AG04449 (cell line): ENCODE measurements at regions of chr11 and their contacts with region 1.

Region 1: DNA sequence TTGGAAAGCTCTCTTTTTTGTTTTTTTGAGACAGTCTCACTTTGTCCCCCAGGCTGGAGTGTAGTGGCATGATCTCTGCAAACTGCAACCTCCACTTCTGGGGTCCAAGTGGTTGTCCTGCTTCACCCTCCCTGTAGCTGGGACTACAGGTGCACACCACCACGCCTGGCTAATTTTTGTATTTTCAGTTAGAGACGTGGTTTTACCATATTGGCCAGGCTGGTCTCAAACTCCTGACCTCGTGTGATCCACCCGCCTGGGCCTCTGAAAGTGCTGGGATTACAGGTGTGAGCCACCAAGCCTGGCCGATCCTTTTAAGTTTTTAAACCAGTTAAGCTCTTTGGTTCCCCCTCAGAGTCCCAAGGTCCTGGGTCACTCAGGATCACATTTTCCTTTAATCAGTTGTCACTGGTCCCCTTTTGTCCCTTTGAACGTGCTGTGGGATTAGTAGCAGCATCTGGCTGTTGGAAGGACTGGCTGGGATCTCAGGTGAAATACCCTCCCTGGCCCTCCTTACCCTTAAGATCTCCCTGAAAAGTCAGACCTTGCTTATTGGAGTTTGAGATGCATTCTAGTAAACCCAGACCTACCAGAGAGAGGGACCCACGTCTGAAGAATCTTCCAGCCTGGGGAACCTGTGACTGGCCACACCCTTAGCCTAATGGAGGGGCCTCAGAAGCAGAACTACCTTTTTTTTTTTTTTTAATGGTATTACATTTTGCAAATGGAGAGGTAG is 8.1 kb downstream of the MALAT1 start:
- DNase-seq: peak; percentile 94
- H3K4me3 ChIP-seq: peak overlapping the region; percentile 99
- CTCF ChIP-seq: no peak

Region 2: DNA sequence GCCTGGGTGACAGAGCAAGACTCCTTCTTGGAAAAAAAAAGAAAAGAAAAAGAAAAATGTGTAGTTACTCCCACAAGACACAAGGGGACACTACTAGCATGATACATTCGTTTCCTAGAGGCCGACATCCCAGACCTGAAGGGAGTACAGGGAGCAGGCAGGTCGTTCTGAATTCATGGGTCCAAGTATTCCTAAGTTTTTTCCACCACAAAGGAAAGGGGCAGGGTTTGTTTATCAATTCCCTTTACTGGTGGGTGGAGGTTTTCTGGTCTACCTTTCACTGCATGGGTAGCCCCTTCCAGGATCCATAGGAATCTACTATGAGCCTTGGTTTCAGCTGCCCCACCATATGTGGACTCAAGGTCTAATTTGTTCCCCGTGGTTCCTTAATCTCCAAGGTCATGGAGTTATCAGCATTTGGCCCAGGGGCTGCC is 140.6 kb before region 1 on chr11:
- CTCF ChIA-PET with region 1: interaction called, 14 read pairs
- POLR2A ChIA-PET with region 1: interaction called, 33 read pairs
- DNase-seq: no peak
- H3K4me3 ChIP-seq: no peak overlapping the region
- CTCF ChIP-seq: peak; percentile 67

Region 3: GRCh38 chr11:65448418-65449105 is 58.4 kb before region 1 on chr11:
- CTCF ChIA-PET with region 1: interaction called, 17 read pairs
- POLR2A ChIA-PET with region 1: interaction called, 142 read pairs
- DNase-seq: no peak
- H3K4me3 ChIP-seq: no peak overlapping the region
- CTCF ChIP-seq: no peak

Region 4: DNA sequence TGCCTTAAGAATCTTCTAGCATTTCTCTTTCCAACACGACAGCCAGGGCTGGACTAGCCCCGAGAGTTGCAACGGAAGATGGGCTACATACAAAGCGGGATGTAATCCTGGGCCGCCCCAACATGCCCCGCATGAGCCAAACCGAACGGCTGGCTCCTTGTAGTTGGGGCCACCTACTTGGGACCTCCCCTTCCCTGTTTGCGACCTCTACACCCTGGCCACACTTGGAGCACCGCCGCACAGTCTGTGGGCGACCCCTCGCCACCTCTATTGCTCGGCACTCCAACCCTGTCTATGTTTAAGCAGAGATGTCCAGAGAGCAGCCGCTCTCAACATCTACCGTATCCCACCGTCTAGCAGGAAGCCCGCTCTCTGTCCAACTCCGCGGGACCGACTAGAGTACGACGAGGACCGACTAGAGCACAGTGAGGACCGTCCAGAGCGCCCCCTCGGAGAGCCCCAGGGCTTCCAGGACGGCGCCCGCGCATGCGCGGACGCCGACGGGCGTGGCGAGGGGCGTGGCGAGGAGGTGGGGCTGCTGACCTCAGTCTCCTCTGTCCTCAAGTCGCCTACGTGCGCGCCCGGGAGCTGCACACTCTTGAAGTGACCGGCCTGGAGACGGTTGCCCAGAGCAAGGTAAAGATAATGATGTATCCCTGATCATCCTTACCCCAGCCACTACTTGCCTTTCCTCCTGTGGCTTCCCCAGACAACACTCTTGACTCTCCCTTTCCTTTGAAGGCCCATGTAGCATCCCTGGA is 52.1 kb before region 1 on chr11:
- CTCF ChIA-PET with region 1: interaction called, 12 read pairs
- POLR2A ChIA-PET with region 1: interaction called, 1,229 read pairs
- DNase-seq: no peak
- H3K4me3 ChIP-seq: peak overlapping the region; percentile 65
- CTCF ChIP-seq: peak; percentile 19

Region 5: GRCh38 chr11:65471410-65471762 is 35.6 kb before region 1 on chr11:
- CTCF ChIA-PET with region 1: interaction called, 40 read pairs
- POLR2A ChIA-PET with region 1: interaction called, 1,229 read pairs
- DNase-seq: no peak
- H3K4me3 ChIP-seq: peak overlapping the region; percentile 42
- CTCF ChIP-seq: peak; percentile 73

Region 6: DNA sequence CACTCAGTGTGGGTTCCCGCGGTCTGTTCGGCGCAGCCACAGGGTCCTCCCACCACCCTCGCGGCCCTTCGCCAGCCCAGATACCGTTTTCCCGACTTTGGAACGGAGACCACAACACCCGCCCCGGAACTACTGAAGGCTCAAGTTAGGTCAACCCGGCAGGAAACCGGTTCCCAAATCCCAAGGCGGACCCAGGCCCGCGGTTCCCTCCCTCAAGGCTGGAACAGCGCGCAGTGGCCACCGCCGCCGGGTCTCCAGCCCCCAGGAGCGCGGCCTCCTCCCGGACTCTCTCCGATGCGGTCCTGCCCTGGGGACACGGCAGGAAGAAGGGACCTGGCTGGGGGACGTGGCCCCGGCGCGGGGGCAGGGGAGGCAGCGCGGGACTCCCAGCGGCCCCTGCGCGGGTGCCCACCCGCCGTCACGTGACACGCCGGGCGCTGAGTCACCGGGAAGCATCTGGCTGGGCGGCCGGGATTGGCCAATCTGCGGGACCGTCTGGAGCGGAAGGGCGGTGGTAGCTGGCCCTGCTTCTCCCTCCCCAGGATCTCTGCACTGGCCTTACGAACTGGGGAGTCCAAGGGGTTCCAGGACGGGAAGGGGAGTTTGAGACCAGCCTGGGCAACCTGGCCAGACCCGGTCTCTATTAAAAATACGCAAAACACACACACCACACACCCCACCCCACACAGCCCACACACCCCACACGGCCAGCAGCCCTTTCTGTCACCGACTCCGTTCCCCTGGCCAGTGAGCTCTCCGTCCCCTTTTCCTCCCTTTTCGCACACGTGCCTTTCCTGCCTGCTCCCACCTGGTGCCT is 29.6 kb before region 1 on chr11:
- CTCF ChIA-PET with region 1: interaction called, 40 read pairs
- POLR2A ChIA-PET with region 1: interaction called, 1,229 read pairs
- DNase-seq: no peak
- H3K4me3 ChIP-seq: peak overlapping the region; percentile 78
- CTCF ChIP-seq: no peak